Naive thymus-derived CD4-positive, alpha-beta T cell (primary cell): ENCODE measurements at regions of chr7 and their contacts with region 1.

Region 1: DNA sequence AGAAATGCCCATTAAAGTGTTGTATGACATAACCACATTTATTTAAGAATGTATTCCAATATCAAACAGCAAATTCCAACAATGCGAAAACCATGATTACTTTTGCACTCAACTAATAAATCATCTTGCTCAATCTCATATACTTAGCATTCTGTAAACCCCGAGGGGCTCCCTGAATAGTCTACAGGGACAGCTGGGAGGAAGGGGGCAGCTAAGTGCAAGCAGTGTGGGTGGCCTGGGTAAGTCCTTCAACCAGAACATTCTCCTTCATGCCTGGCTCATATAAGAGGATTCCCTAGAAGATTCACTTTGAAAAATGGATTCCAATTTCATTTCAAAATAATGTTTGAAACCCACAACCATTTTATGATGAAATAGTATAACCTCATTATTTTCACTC is 355.5 kb downstream of the CDC14C start:
- DNase-seq: no peak
- ATAC-seq: no peak
- H3K4me3 ChIP-seq: no peak overlapping the region
- H3K4me3 Mint-ChIP-seq: no peak overlapping the region
- H3K27ac ChIP-seq: no peak overlapping the region
- H3K27ac Mint-ChIP-seq: no peak overlapping the region
- H3K4me1 ChIP-seq: no peaks in the 10 kb centered on the region
- H3K4me1 Mint-ChIP-seq: no peaks in the 10 kb centered on the region
- H3K27me3 ChIP-seq: no peaks in the 10 kb centered on the region
- H3K27me3 Mint-ChIP-seq: no peaks in the 10 kb centered on the region

Region 2: GRCh38 chr7:48781783-48782182 is 498.1 kb before region 1 on chr7:
- CTCF ChIA-PET with region 1: no interaction called
- POLR2A ChIA-PET with region 1: no interaction called
- intact Hi-C with region 1: loop called in 1 of 2 experiments (anchors 10 kb)
- DNase-seq: no peak
- ATAC-seq: no peak
- H3K4me3 ChIP-seq: no peak overlapping the region
- H3K4me3 Mint-ChIP-seq: no peak overlapping the region
- H3K27ac ChIP-seq: no peak overlapping the region
- H3K27ac Mint-ChIP-seq: no peak overlapping the region
- H3K4me1 ChIP-seq: no peaks in the 10 kb centered on the region
- H3K4me1 Mint-ChIP-seq: no peaks in the 10 kb centered on the region
- H3K27me3 ChIP-seq: no peaks in the 10 kb centered on the region
- H3K27me3 Mint-ChIP-seq: no peaks in the 10 kb centered on the region

Region 3: DNA sequence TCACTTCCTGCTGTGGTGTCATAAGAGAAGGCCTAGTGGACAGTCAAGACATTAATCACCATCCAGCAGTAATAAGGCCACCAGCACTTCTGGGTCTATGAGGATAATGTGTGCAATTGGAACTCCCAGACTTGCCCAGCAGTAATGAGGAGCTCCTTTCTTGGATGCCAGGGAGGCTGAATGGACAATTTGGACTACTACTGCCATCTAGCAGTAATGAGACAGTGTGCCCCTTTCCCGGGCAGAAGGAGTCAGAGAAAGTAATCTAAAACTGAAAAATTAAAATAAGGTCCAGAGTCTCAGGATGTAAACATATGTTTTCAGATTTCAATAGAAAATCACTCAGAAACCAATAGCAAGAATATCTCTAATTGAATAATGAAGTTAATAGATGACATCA is 44.8 kb after region 1 on chr7:
- CTCF ChIA-PET with region 1: no interaction called
- POLR2A ChIA-PET with region 1: no interaction called
- intact Hi-C with region 1: no loop called
- DNase-seq: no peak
- ATAC-seq: no peak
- H3K4me3 ChIP-seq: no peak overlapping the region
- H3K4me3 Mint-ChIP-seq: no peak overlapping the region
- H3K27ac ChIP-seq: no peak overlapping the region
- H3K27ac Mint-ChIP-seq: no peak overlapping the region
- H3K4me1 ChIP-seq: no peaks in the 10 kb centered on the region
- H3K4me1 Mint-ChIP-seq: no peaks in the 10 kb centered on the region
- H3K27me3 ChIP-seq: no peaks in the 10 kb centered on the region
- H3K27me3 Mint-ChIP-seq: no peaks in the 10 kb centered on the region